ENCODE measurements at regions of chr19 and their contacts with region 1.

Region 1: DNA sequence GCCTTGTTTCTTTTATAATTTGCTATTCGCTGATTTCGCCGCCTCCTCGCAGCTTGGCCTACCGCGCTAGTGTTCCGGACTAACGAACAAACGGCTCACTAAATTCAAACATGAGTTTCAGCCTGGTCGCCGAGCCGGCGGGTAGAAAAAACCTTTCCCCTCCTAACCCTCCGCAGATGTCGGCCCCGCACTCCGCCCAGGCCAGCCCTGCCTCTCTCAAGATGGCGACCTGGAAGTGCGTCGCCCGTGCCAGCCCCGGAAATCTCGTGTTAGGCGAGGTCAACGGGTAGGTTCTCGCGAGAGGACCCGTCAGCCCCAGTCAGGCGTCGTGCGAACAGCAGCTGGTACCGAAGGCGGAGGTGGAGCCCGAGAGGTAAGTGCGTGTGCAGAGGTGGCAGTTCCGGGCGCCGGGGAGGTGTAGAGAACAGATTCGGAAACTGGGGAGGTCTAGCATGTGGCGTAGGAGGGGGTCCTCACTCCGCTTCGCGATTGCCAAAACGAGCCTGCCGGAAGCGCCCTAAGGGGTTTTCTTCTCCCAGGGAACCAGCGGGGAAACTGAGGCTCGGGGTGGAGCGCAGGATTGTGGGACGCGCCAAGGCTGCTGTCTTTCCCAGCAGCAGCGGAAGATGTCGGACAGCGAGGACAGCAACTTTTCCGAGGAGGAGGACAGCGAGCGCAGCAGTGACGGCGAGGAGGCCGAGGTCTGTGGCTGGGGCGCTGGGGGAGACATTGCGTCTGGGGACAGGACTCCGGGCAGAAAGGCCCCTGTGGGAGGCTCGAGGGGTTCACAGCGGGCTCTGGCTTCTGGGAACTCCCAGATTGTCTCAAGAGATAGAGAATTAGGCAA is at the start of gene SUPT5H:
- DNase-seq: peak; percentile 98
- CTCF ChIP-seq: no peak

Region 2: GRCh38 chr19:39474139-39474622 is 28.7 kb after region 1 on chr19:
- CTCF ChIA-PET with region 1: interaction called, 22 read pairs
- POLR2A ChIA-PET with region 1: no interaction called
- DNase-seq: peak; percentile 72
- CTCF ChIP-seq: peak; percentile 66

Region 3: GRCh38 chr19:39502640-39503417 is 57.3 kb after region 1 on chr19:
- CTCF ChIA-PET with region 1: interaction called, 12 read pairs
- POLR2A ChIA-PET with region 1: no interaction called
- DNase-seq: peak; percentile 87
- CTCF ChIP-seq: peak; percentile 87